ENCODE measurements at regions of chr16 and their contacts with region 1.

Region 1: GRCh38 chr16:89873972-89874689 is 739 bp downstream of the TCF25 start:
- DNase-seq: peak; percentile 93 to 97
- H3K4me3 ChIP-seq: peak overlapping the region; percentile 91 to 99
- H3K27ac ChIP-seq: peak overlapping the region; percentile 99 to 100
- H3K4me1 ChIP-seq: peaks cover 0 to 21% (median 19%) of the 10 kb centered on the region in 4 donors
- H3K27me3 ChIP-seq: no peaks in the 10 kb centered on the region
- CTCF ChIP-seq: no peak

Region 2: DNA sequence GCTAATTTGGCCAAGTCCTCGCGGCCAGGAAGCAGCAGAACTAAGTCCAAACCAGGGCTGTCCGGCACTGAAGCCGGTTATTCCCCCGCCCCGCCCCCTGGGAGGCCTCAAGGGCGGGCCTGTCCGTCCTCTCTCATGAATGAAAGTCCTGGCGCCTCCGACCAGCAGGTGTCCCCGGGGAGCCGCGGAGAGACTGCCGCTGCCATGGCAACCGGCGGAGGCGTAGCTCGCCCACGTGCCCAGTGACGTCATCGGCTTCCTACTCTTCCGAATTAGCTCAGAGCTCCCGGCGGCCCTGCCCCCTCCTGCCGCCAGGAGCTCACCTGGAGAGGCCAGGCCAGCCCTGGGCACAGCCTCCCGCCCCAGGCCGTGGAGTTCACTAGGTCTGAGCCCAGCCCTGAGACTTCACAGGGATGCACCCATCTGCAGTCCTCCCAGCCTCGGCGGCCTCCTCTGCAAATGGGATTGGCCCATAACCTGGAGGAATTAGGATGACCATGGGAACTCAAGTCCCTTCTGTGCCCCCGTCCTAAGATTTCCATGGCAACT is 174.0 kb before region 1 on chr16:
- intact Hi-C with region 1: loop called (anchors 2 kb)
- DNase-seq: peak; percentile 97 to 99
- H3K4me3 ChIP-seq: peak overlapping the region; percentile 60 to 88
- H3K27ac ChIP-seq: peak overlapping the region; percentile 84
- H3K4me1 ChIP-seq: peaks cover 7 to 29% (median 26%) of the 10 kb centered on the region in 4 donors
- H3K27me3 ChIP-seq: peaks cover 0 to 16% of the 10 kb centered on the region in 2 donors
- CTCF ChIP-seq: peak; percentile 51 to 67

Region 3: GRCh38 chr16:89779231-89779908 is 94.8 kb before region 1 on chr16:
- intact Hi-C with region 1: no loop called
- DNase-seq: no peak
- H3K4me3 ChIP-seq: no peak overlapping the region
- H3K27ac ChIP-seq: no peak overlapping the region
- H3K4me1 ChIP-seq: no peaks in the 10 kb centered on the region
- H3K27me3 ChIP-seq: no peaks in the 10 kb centered on the region
- CTCF ChIP-seq: no peak